Heart left ventricle (tissue), 16 donors: ENCODE measurements at regions of chr6 and their contacts with region 1.

Region 1: DNA sequence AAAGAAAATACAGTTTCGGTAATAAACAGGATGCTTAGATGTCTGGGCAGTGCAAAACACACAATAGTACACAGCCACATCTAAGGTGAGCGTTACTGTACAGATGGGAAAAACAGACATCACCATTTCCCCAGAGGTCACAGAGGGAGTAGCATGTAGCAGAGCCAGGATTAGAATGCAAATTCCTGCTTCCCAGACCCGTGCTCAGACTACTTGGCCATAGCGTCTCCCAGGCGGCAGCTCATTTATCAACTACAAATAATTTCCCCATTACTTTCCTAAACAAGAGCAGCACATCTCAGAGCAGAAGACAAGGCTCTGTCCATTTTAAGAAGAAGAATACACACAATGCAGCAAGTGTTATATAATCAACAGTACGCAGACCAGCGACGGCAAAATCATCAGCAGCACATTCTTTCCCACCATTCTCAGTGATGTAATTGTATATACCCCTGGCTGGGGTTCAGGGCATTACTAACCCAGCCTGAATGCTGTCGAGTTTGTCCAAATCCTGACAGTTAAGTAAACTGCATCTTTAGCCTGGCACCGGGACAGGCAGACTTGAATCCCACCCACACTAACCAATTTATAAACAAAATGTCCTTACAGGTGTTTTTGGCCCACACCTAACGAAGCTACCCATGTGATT is 61.9 kb downstream of the CNKSR3 start:
- DNase-seq: peak in 2 of 5 donors; percentile 46 to 51
- ATAC-seq: peak; percentile 64 to 94 (median 88)
- H3K4me3 ChIP-seq: peak overlapping the region in 7 of 12 donors; percentile 4 to 31 (median 14)
- H3K27ac ChIP-seq: peak overlapping the region in 11 of 12 donors; percentile 30 to 74 (median 57)
- H3K4me1 ChIP-seq: peaks cover 5 to 45% (median 22%) of the 10 kb centered on the region in 12 donors
- H3K27me3 ChIP-seq: no peaks in the 10 kb centered on the region
- CTCF ChIP-seq: peak in 5 of 12 donors; percentile 8 to 45 (median 27)
- POLR2A ChIP-seq: no peak

Region 2: DNA sequence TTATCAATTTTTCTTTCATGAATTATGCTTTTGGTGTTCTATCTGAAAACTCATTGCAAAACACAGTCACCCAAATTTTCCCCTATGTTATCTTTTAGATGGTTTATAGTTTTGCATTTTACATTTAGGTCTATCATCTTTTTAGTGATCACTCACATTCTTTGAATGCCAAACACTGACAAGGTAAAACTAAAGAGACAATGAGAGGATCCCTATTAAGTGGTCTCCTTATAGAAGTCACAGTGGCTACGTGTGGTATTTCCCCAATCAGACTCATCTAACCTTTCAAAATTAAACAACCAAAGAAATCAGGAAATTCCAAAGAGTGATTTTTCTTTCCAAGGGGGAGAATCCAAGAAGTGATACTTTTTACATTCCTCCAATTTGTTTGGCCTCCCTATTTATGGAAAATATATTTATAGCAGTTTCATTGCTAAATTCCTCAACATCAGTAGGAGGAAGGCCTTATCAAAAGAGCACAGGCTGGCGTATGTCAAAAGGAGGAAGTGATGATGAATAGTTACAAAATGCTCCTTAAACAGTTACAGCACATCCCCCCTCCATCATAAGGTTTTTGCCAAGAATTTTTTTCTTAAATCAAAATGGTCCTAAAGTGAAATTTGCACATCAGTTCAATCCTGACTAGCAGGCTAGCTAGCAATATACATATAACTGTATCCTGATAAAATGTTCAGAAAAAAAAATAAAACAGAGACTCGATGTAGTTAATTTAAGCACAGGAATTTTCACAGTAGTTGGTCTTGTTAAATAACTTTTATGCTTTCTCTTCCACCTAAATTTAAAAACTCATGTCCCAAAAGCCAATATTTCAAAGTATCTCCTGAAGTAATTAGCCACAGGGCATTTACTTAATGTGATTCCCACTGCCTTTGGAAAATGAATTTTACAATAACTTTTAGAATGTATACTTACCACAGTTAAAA is 15.8 kb before region 1 on chr6:
- intact Hi-C with region 1: loop called in 1 of 10 experiments (anchors 1 kb)
- DNase-seq: peak in 1 of 5 donors; percentile 24
- ATAC-seq: peak in 3 of 4 donors; percentile 68 to 80 (median 72)
- H3K4me3 ChIP-seq: no peak overlapping the region
- H3K27ac ChIP-seq: peak overlapping the region in 7 of 12 donors; percentile 10 to 61 (median 35)
- H3K4me1 ChIP-seq: peaks cover 0 to 43% (median 21%) of the 10 kb centered on the region in 12 donors
- H3K27me3 ChIP-seq: no peaks in the 10 kb centered on the region
- CTCF ChIP-seq: no peak
- POLR2A ChIP-seq: no peak

Region 3: GRCh38 chr6:154479771-154480639 is 31.4 kb after region 1 on chr6:
- intact Hi-C with region 1: loop called in 1 of 10 experiments (anchors 5 kb)
- DNase-seq: no peak
- ATAC-seq: no peak
- H3K4me3 ChIP-seq: peak overlapping the region in 5 of 12 donors; percentile 8 to 33 (median 14)
- H3K27ac ChIP-seq: peak overlapping the region in 1 of 12 donors; percentile 62
- H3K4me1 ChIP-seq: peaks cover 0 to 51% (median 28%) of the 10 kb centered on the region in 12 donors
- H3K27me3 ChIP-seq: no peaks in the 10 kb centered on the region
- CTCF ChIP-seq: no peak
- POLR2A ChIP-seq: no peak

Region 4: DNA sequence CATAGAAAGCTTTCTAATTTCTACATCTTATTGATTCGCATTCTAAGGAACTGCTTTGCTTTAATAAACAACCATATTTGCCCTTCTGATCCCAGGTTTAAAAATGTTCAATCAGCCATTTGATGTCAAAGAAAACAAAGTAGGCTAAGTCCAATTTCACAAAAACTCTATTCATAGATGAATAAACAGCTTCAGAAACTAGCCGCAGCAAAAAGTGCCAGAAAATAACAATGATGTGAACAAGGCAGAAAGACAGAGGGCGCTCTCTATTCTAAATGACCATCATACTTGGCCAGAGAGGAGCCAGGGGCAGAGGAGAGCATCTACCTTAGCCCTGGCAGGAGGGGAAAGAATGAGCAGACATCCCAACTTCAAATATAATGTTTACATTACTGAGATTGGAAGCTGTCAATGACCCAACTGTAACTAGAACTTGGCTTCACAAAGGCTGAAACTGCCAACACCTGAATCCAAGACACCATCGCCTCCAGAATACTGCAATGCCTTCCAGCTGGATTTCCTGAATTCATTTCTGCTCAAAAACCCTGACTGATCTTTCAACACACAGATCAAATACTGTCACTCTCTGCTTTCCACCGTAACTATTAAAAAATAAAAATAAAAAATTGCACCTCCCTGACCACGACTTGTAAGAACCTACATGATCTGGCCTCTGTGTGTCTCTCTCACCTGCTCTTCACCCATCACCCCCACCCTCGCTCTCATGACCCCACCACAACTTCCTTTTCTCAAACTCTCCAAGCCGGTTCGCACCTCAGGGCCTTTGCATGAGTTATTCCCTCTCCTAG is 52.4 kb after region 1 on chr6:
- intact Hi-C with region 1: loop called in 4 of 10 experiments (anchors 5 to 10 kb)
- DNase-seq: no peak
- ATAC-seq: peak in 2 of 4 donors; percentile 48 to 56
- H3K4me3 ChIP-seq: no peak overlapping the region
- H3K27ac ChIP-seq: peak overlapping the region in 4 of 12 donors; percentile 4 to 44 (median 16)
- H3K4me1 ChIP-seq: peaks cover 0 to 31% (median 9%) of the 10 kb centered on the region in 12 donors
- H3K27me3 ChIP-seq: no peaks in the 10 kb centered on the region
- CTCF ChIP-seq: peak in 10 of 12 donors; percentile 9 to 55 (median 35)
- POLR2A ChIP-seq: no peak

Region 5: GRCh38 chr6:154733012-154733625 is 284.5 kb after region 1 on chr6 and contains the start of gene SCAF8:
- intact Hi-C with region 1: no loop called
- DNase-seq: peak; percentile 81 to 91 (median 88)
- ATAC-seq: peak; percentile 66 to 91 (median 82)
- H3K4me3 ChIP-seq: peak within 1 kb of the TSS; percentile 75 to 100 (median 98)
- H3K27ac ChIP-seq: peak within 1 kb of the TSS; percentile 97 to 100 (median 100)
- H3K4me1 ChIP-seq: peaks cover 17 to 50% (median 44%) of the 10 kb centered on the region in 12 donors
- H3K27me3 ChIP-seq: no peaks in the 10 kb centered on the region
- CTCF ChIP-seq: peak; percentile 61 to 98 (median 86)
- POLR2A ChIP-seq: peak in 1 of 2 donors; percentile 24
- total RNA-seq, gene SCAF8: 42.9 to 83.5 (median 64.6) TPM